K562 (cell line): ENCODE measurements at regions of chr3 and their contacts with region 1.

Region 1: GRCh38 chr3:112013058-112013783 is 14.5 kb downstream of the TAGLN3 start:
- DNase-seq: peak; percentile 27 to 60 (median 34)
- ATAC-seq: peak; percentile 94
- H3K4me3 ChIP-seq: no peak overlapping the region
- H3K27ac ChIP-seq: no peak overlapping the region
- H3K4me1 ChIP-seq: no peaks in the 10 kb centered on the region
- H3K27me3 ChIP-seq: no peaks in the 10 kb centered on the region; a peak in 1 of 5 replicates
- CTCF ChIP-seq: peak; percentile 57 to 70 (median 70)
- EP300 ChIP-seq: no peak
- POLR2A ChIP-seq: no peak
- RAD21 ChIP-seq: peak; percentile 45 to 57

Region 2: GRCh38 chr3:111895079-111895478 is 118.1 kb before region 1 on chr3:
- CTCF ChIA-PET with region 1: no interaction called
- POLR2A ChIA-PET with region 1: no interaction called
- in situ Hi-C with region 1: no loop called
- intact Hi-C with region 1: loop called (anchors 10 kb)
- DNase-seq: peak in 1 of 4 experiments; percentile 4
- ATAC-seq: no peak
- H3K4me3 ChIP-seq: no peak overlapping the region
- H3K27ac ChIP-seq: no peak overlapping the region
- H3K4me1 ChIP-seq: no peaks in the 10 kb centered on the region
- H3K27me3 ChIP-seq: no peaks in the 10 kb centered on the region
- CTCF ChIP-seq: peak in 2 of 3 experiments; percentile 11 to 18; a peak in 1 of 6 replicates
- EP300 ChIP-seq: no peak
- POLR2A ChIP-seq: no peak
- RAD21 ChIP-seq: peak in 1 of 2 experiments; percentile 23; a peak in 1 of 4 replicates

Region 3: DNA sequence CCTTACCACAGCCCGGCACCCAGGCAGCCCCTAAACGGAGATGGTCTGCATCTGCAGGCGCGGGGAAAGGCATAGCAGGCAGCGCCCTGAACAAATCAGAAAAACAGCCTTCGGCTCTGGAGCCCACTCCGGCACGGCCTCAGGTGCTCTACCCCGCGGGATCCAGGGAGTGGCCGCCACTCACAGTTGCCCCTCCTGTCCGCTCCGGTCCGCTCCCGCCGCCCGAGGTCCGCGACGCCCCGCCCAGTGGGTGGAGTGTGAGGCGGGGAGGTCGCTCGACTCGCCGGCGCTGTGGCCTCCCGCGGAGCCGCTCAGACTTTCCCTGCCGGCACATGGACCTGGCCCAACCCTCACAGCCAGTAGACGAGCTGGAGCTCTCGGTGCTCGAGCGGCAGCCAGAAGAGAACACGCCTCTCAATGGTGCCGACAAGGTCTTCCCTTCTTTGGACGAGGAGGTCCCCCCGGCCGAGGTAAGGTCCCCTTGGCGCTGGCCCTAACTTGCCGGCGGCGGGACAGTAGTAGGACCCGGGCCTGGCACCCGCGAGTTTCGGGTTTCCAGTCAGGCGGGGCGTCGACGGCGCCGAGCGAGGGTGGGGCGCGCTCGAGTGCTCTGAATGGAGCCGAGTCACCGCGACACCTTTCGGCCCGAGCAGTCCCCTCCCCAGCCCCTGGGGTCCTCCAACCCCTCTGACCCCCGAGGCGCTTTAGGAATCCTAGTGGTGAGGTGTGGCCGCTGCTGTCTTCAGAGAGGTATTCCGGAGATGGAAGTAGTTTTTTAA is 73.0 kb after region 1 on chr3 and contains the start of gene C3orf52:
- CTCF ChIA-PET with region 1: no interaction called
- POLR2A ChIA-PET with region 1: no interaction called
- in situ Hi-C with region 1: no loop called
- intact Hi-C with region 1: no loop called
- DNase-seq: peak; percentile 80 to 88 (median 86)
- ATAC-seq: peak; percentile 98
- H3K4me3 ChIP-seq: peak within 1 kb of the TSS; percentile 45
- H3K27ac ChIP-seq: peak within 1 kb of the TSS; percentile 65
- H3K4me1 ChIP-seq: peaks cover 5 to 13% of the 10 kb centered on the region in 2 experiments; a peak in 4 of 5 replicates
- H3K27me3 ChIP-seq: no peaks in the 10 kb centered on the region
- CTCF ChIP-seq: 0 out of 6 replicates have a peak, but pooled peaks of 1 of the 3 experiments have one; percentile 3
- EP300 ChIP-seq: no peak
- POLR2A ChIP-seq: peak; percentile 68
- RAD21 ChIP-seq: no peak
- polyA plus RNA-seq, gene C3orf52: 5.5 to 5.6 TPM